ENCODE measurements at regions of chr19 and their contacts with region 1.

Region 1: DNA sequence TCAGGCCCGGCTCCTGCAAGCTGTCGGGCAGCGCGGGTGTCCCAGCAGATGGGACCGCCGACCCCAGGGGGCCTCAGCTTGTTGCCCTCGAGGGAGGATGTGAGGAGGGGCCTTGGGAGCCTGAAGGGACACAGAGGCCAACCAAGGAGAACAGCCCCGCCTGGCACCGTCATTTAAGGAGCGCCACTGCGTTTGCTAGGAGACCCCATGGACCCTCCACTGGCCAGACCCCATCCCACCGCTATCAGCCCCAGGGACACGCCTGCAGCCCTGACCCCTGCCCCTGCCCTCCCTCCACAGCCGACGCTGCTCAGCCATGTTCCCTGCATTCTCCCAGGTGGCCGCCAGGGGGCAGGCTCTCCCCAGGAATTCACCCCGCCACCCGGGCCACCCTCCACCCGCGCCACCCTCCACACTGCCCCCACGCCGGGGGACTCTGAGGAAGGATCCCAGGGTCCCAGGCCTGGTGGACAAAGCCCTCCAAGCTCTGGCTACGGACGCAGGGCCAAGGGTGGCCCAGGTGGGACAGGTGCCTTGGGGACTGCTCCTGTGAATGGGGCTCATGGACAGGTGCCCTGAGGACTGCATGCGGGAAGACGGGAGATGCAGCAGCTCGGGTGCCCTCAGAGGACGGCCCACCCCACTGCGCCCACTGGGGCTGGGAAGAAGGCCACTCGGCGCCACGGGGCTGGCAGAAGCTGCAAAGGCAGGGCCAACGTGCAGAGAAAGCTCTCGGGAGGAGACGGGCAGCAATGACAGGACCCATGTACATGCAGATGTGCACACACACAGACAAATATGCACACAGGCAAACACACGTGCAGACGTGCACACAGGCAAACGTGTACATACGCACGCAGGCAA is 34.4 kb downstream of the PIP5K1C start:
- DNase-seq: peak; percentile 81
- ATAC-seq: peak; percentile 74
- H3K4me3 Mint-ChIP-seq: no peak overlapping the region
- H3K27ac Mint-ChIP-seq: peak overlapping the region; percentile 76
- H3K4me1 Mint-ChIP-seq: no peaks in the 10 kb centered on the region
- H3K27me3 Mint-ChIP-seq: no peaks in the 10 kb centered on the region
- CTCF ChIP-seq: peak; percentile 98

Region 2: GRCh38 chr19:3700221-3701032 is 34.5 kb after region 1 on chr19 and contains the start of gene PIP5K1C:
- CTCF ChIA-PET with region 1: interaction called, 22 read pairs
- POLR2A ChIA-PET with region 1: no interaction called
- DNase-seq: peak; percentile 93
- ATAC-seq: peak; percentile 95
- H3K4me3 Mint-ChIP-seq: peak within 1 kb of the TSS; percentile 78
- H3K27ac Mint-ChIP-seq: peak within 1 kb of the TSS; percentile 68
- H3K4me1 Mint-ChIP-seq: peaks cover 3% of the 10 kb centered on the region; the same call in 1 of the 2 replicates
- H3K27me3 Mint-ChIP-seq: peaks cover 2% of the 10 kb centered on the region; the same call in 1 of the 2 replicates
- CTCF ChIP-seq: peak; percentile 51; the same call in 1 of the 2 replicates
- total RNA-seq, gene PIP5K1C: 34.0 to 36.2 TPM (median 36.0 TPM) in 3 replicates